ENCODE measurements at regions of chr10 and their contacts with region 1.

Region 1: DNA sequence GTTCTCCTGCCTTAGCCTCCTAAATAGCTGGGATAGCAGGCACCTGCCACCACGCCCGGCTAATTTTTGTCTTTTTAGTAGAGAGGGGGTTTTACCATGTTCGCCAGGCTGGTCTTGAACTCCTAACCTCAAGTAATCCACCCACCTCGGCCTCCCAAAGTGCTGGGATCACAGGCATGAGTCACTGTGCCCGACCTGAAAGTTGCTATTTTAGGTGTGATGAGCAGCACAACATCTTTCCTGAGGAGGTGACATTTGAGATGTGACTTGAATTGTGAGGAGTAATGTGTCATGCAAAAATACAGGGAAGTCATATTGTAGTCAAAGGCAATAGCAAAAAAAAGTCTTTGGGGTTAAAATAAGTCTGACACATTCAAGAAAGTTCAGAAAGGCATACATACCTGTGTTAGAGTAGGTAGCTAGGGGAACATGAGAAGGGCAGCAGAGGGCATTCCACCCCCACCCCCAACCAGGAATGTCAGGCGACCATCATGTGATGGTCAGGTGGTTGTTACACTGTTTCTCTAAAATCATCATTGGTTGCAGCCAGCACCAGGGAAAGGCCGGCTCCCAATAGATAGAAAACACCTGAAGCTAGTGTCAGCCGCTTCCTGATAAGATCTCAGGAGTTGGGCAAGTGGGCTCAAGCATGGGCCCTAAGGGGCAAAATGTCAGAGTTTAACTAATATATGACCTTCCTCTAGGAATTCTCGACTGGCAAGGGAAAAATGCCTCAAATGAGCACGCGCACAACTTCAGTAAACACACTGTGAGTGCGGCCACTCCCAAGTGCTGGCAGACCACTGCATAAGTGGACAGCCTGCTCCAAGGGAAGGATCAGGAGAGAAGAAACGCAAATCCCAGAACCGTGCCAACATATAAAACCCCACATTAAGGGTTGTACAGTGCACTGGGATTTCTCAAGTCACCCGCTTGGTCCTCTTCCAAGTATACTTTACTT is at the start of gene TACC2:
- DNase-seq: no peak
- ATAC-seq: peak in 2 of 8 donors; percentile 24 to 76
- H3K4me3 ChIP-seq: no peak within 1 kb of the TSS
- H3K27ac ChIP-seq: peak within 1 kb of the TSS in 8 of 10 donors; percentile 0 to 62 (median 36)
- H3K4me1 ChIP-seq: peaks cover 0 to 19% (median 9%) of the 10 kb centered on the region in 9 donors
- H3K27me3 ChIP-seq: no peaks in the 10 kb centered on the region
- CTCF ChIP-seq: no peak
- total RNA-seq, gene TACC2: 266 to 451 (median 378) TPM

Region 2: GRCh38 chr10:121900443-121901174 is 88.0 kb before region 1 on chr10:
- intact Hi-C with region 1: no loop called
- DNase-seq: peak in 1 of 2 donors; percentile 21
- ATAC-seq: peak in 7 of 8 donors; percentile 63 to 81 (median 70)
- H3K4me3 ChIP-seq: no peak overlapping the region
- H3K27ac ChIP-seq: no peak overlapping the region
- H3K4me1 ChIP-seq: peaks cover 0 to 6% (median 0%) of the 10 kb centered on the region in 9 donors
- H3K27me3 ChIP-seq: no peaks in the 10 kb centered on the region
- CTCF ChIP-seq: peak; percentile 28 to 81 (median 75)

Region 3: DNA sequence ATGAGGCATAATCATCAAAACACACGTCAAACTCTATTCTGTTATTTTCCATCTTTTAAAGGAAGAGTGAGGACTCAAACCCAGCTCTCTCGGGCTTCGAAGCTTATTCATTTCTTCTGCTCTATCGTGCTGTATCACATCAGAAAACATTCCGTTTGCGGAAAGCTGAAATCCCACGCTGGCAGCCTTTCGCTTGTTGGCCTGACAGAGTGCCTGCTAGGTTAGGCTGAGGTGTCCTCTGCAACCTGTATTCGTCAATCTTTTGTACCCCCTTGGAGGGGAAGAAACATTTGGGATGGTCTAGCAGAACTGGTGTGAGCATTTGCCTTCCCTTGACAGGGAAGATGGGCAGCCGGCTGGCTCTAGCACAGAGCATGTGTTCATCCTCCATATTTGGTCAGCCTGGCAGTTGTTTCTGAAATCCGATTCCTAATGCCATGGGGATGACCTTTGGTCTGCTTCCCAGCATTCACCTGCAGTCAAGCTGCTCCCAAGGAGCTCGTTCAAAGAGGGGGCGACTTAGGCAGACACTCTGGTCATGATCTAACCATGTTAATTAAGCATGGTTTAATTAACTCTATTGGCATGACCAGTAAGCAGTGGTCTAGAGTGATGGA is 55.5 kb after region 1 on chr10:
- intact Hi-C with region 1: loop called in 1 of 10 experiments (anchors 5 kb)
- DNase-seq: peak in 1 of 2 donors; percentile 54
- ATAC-seq: peak; percentile 61 to 89 (median 84)
- H3K4me3 ChIP-seq: no peak overlapping the region
- H3K27ac ChIP-seq: peak overlapping the region; percentile 30 to 82 (median 54)
- H3K4me1 ChIP-seq: peaks cover 0 to 36% (median 16%) of the 10 kb centered on the region in 9 donors
- H3K27me3 ChIP-seq: no peaks in the 10 kb centered on the region
- CTCF ChIP-seq: no peak